ENCODE measurements at regions of chr1 and their contacts with region 1.

Region 1: GRCh38 chr1:234326497-234327366 is 46.5 kb upstream of the COA6 start:
- DNase-seq: peak; percentile 56
- H3K4me3 Mint-ChIP-seq: peak overlapping the region; percentile 74
- H3K27ac Mint-ChIP-seq: peak overlapping the region; percentile 2
- H3K4me1 Mint-ChIP-seq: peaks cover 23% of the 10 kb centered on the region
- H3K27me3 Mint-ChIP-seq: peaks cover 29% of the 10 kb centered on the region

Region 2: DNA sequence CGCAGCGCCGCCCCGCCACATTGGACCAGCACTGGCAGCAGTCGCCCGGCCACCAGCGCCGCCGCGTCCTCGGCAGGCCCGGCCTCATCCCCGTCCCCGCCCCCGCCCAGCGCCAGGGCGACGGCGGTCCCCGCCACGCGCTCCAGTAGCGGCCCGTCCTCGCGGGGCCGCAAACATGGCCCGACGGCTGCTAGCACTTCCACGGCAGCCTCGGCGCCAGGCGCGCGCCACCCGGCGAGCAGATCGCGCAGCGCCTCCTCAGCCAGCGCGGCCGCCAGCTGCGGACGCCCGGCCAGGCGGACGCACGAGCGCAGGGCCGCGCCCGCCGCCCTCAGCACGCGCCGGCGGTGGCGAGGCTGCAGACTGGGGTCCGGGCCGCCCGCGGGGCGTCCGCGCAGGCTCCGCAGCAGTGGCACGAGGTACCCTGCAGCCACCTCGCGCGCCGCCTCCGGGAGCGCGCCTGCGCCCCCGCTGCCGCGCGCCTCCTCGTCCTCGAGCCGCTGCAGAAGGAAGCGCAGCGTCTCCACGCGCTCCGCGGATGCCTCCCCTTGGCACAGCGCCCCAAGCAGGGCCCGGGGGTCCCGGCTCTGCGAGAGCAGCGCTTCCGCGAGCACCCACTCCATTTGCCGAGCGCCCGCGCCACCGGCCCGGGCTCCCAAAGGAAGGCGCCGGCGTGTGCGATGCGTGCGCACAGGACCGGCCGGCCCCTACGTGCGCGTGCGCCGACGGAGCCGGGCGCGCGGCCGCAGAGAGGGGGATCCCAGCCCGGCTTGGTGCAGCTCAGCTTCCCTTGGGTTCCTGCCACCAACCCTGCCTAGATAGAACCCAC is 152.0 kb after region 1 on chr1 and contains the start of gene TARBP1:
- intact Hi-C with region 1: loop called (anchors 5 kb)
- DNase-seq: peak; percentile 73
- H3K4me3 Mint-ChIP-seq: peak within 1 kb of the TSS; percentile 81
- H3K27ac Mint-ChIP-seq: peak within 1 kb of the TSS; percentile 60
- H3K4me1 Mint-ChIP-seq: peaks cover 47% of the 10 kb centered on the region
- H3K27me3 Mint-ChIP-seq: peaks cover 16% of the 10 kb centered on the region
- total RNA-seq, gene TARBP1: 79.7 and 87.5 TPM in 2 replicates

Measured in activated T-helper 2 cell treated with anti-CD3 and anti-CD28 coated beads, Interferon-gamma antibody, Interleukin-2, Interleukin-4, amounts not matched to agents 10 μg/mL and 5 μg/mL and 100 μg/mL, durations not matched to agents 14 hours and 24 hours and 36 hours (primary cell).